ENCODE measurements at regions of chrX and their contacts with region 1.

Region 1: GRCh38 chrX:80808160-80808735 is 1.4 kb downstream of the BRWD3 start:
- DNase-seq: peak; percentile 54 to 82 (median 75)
- ATAC-seq: peak; percentile 72
- H3K4me3 ChIP-seq: peak overlapping the region; percentile 90
- H3K4me3 Mint-ChIP-seq: peak overlapping the region; percentile 81 to 96 (median 94)
- H3K27ac ChIP-seq: peak overlapping the region; percentile 88
- H3K27ac Mint-ChIP-seq: peak overlapping the region; percentile 72 to 99 (median 96)
- H3K4me1 ChIP-seq: peaks cover 8 to 21% of the 10 kb centered on the region in 2 donors
- H3K4me1 Mint-ChIP-seq: peaks cover 5 to 53% (median 32%) of the 10 kb centered on the region in 7 donors
- H3K27me3 ChIP-seq: no peaks in the 10 kb centered on the region
- H3K27me3 Mint-ChIP-seq: peaks cover 0 to 4% (median 0%) of the 10 kb centered on the region in 5 donors

Region 2: DNA sequence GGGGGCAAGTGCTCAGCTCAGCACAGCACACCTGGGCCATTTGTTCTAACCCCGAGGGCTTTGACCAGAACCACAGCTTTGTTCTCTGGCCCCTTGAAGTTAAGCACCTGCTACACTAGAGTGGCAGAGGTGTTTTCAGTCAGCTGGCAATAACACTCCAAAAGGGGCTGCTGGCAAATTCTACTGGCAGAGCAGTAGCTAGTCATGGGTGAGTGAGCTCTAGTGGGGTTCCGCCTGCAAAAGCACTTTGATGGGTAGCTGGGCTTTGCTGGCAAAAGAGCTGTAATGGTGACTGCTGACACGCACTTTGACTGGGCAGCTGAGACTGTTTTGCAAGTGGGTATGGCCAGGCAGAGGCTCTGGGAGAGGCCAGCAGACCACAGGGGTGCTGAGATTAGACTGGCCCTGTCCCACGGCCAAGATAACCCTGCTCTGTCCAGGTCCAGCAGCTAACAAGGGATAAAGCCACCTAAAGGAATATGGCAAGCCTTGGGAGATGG is 453.2 kb before region 1 on chrX:
- CTCF ChIA-PET with region 1: no interaction called
- POLR2A ChIA-PET with region 1: no interaction called
- intact Hi-C with region 1: no loop called
- DNase-seq: no peak
- ATAC-seq: no peak
- H3K4me3 ChIP-seq: no peak overlapping the region
- H3K4me3 Mint-ChIP-seq: no peak overlapping the region
- H3K27ac ChIP-seq: no peak overlapping the region
- H3K27ac Mint-ChIP-seq: no peak overlapping the region
- H3K4me1 ChIP-seq: no peaks in the 10 kb centered on the region
- H3K4me1 Mint-ChIP-seq: no peaks in the 10 kb centered on the region
- H3K27me3 ChIP-seq: no peaks in the 10 kb centered on the region
- H3K27me3 Mint-ChIP-seq: no peaks in the 10 kb centered on the region

Region 3: DNA sequence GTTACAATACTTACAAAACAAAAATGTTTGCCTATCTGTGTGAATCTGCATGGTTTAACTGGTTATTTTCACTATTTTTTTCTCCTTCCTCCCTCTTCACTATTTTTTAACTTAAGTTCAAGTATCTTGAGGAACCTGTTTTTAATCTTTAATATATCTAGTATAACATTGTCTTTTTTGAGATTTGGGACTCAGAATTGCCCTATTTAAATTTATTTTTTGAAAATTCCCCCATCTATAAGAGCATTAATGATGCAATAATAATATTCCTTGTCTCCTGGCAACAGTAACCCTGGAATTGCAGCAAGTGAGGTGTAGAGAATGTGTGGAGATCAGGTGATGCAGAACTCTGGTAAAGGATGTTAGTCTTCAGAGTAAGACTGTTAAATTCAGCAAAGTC is 388.1 kb before region 1 on chrX and contains the start of gene TENT5D:
- CTCF ChIA-PET with region 1: no interaction called
- POLR2A ChIA-PET with region 1: no interaction called
- intact Hi-C with region 1: no loop called
- DNase-seq: no peak
- ATAC-seq: no peak
- H3K4me3 ChIP-seq: no peak within 1 kb of the TSS
- H3K4me3 Mint-ChIP-seq: no peak within 1 kb of the TSS
- H3K27ac ChIP-seq: no peak within 1 kb of the TSS
- H3K27ac Mint-ChIP-seq: no peak within 1 kb of the TSS
- H3K4me1 ChIP-seq: no peaks in the 10 kb centered on the region
- H3K4me1 Mint-ChIP-seq: no peaks in the 10 kb centered on the region
- H3K27me3 ChIP-seq: no peaks in the 10 kb centered on the region
- H3K27me3 Mint-ChIP-seq: peaks cover 0 to 4% (median 0%) of the 10 kb centered on the region in 5 donors
- total RNA-seq, gene TENT5D: not detected

Region 4: DNA sequence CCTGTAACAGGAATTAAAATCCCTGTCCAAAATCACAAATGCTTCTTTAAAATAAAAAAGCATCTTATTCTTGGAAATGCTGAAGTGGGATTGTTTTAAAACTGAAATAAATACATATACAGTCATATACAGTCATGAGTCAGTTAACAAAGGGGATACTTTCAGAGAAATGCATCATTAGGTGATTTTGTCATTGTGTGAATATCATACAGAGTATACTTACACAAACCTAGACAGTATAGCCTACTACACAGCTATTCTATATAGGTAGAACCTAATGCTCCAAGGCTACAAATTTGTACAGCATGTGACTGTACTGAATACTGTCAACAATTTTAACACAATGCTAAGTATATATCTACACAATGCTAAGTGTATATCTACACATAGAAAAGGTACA is 102.9 kb before region 1 on chrX:
- CTCF ChIA-PET with region 1: no interaction called
- POLR2A ChIA-PET with region 1: no interaction called
- intact Hi-C with region 1: no loop called
- DNase-seq: no peak
- ATAC-seq: no peak
- H3K4me3 ChIP-seq: no peak overlapping the region
- H3K4me3 Mint-ChIP-seq: no peak overlapping the region
- H3K27ac ChIP-seq: no peak overlapping the region
- H3K27ac Mint-ChIP-seq: no peak overlapping the region
- H3K4me1 ChIP-seq: no peaks in the 10 kb centered on the region
- H3K4me1 Mint-ChIP-seq: peaks cover 0 to 1% (median 0%) of the 10 kb centered on the region in 7 donors
- H3K27me3 ChIP-seq: no peaks in the 10 kb centered on the region
- H3K27me3 Mint-ChIP-seq: no peaks in the 10 kb centered on the region

Region 5: GRCh38 chrX:80846247-80846646 is 38.0 kb after region 1 on chrX:
- CTCF ChIA-PET with region 1: no interaction called
- POLR2A ChIA-PET with region 1: no interaction called
- intact Hi-C with region 1: loop called in 1 of 2 experiments (anchors 5 kb)
- DNase-seq: no peak
- ATAC-seq: no peak
- H3K4me3 ChIP-seq: no peak overlapping the region
- H3K4me3 Mint-ChIP-seq: no peak overlapping the region
- H3K27ac ChIP-seq: no peak overlapping the region
- H3K27ac Mint-ChIP-seq: no peak overlapping the region
- H3K4me1 ChIP-seq: no peaks in the 10 kb centered on the region
- H3K4me1 Mint-ChIP-seq: no peaks in the 10 kb centered on the region
- H3K27me3 ChIP-seq: no peaks in the 10 kb centered on the region
- H3K27me3 Mint-ChIP-seq: no peaks in the 10 kb centered on the region

Region 6: GRCh38 chrX:80876877-80877276 is 68.6 kb after region 1 on chrX:
- CTCF ChIA-PET with region 1: no interaction called
- POLR2A ChIA-PET with region 1: no interaction called
- intact Hi-C with region 1: loop called in 1 of 2 experiments (anchors 2 kb)
- DNase-seq: peak in 5 of 9 donors; percentile 2 to 36 (median 23)
- ATAC-seq: no peak
- H3K4me3 ChIP-seq: no peak overlapping the region
- H3K4me3 Mint-ChIP-seq: no peak overlapping the region
- H3K27ac ChIP-seq: no peak overlapping the region
- H3K27ac Mint-ChIP-seq: no peak overlapping the region
- H3K4me1 ChIP-seq: no peaks in the 10 kb centered on the region
- H3K4me1 Mint-ChIP-seq: no peaks in the 10 kb centered on the region
- H3K27me3 ChIP-seq: no peaks in the 10 kb centered on the region
- H3K27me3 Mint-ChIP-seq: no peaks in the 10 kb centered on the region

Region 7: DNA sequence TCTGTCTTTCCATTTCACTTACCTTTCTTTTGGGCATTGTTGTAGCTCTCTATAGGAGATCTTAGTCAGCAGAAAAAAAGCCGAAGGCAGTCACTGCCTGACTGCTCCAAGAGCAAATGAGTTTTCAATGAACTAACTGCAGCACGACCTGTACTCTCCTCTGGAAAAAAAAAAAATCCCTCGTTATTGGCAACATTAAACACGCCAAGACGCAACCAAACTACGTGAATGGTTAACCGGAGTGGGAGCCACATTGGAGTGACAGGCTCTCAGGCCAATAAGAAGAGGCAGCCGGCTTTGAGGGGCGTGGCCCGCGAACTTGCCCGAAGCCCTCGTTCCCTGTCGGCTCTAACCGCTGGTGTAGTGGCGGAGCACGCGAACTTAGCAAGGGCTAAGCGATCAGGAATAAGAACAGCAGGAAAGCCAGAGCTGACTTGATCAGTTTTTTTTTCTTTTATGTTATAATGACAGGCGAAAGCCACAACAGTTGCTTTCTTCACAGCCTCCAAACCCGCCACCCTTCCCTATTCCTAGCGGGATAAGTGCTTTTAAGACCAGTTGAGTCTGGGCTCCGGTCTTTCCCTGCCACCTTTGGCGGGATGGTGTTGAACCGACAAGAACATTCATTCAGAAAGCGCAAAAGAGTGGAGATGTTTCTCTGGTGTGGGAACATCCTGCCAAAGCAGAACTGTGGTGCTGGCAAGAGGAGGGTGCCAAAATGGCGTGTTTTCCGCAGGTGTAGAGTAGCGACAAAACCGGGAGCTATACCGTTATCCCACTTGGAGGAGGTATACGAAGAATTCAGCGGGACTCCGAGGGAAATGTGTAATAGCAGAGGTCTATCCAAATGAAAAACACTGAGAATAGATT is 313.5 kb after region 1 on chrX:
- CTCF ChIA-PET with region 1: interaction called, 4 read pairs
- POLR2A ChIA-PET with region 1: no interaction called
- intact Hi-C with region 1: loop called (anchors 1 kb)
- DNase-seq: peak; percentile 71 to 87 (median 84)
- ATAC-seq: peak; percentile 97
- H3K4me3 ChIP-seq: peak overlapping the region; percentile 77
- H3K4me3 Mint-ChIP-seq: peak overlapping the region; percentile 85 to 98 (median 93)
- H3K27ac ChIP-seq: peak overlapping the region; percentile 52
- H3K27ac Mint-ChIP-seq: peak overlapping the region; percentile 63 to 90 (median 77)
- H3K4me1 ChIP-seq: no peaks in the 10 kb centered on the region
- H3K4me1 Mint-ChIP-seq: peaks cover 0 to 17% (median 6%) of the 10 kb centered on the region in 7 donors
- H3K27me3 ChIP-seq: no peaks in the 10 kb centered on the region
- H3K27me3 Mint-ChIP-seq: peaks cover 0 to 21% (median 0%) of the 10 kb centered on the region in 5 donors

Region 8: DNA sequence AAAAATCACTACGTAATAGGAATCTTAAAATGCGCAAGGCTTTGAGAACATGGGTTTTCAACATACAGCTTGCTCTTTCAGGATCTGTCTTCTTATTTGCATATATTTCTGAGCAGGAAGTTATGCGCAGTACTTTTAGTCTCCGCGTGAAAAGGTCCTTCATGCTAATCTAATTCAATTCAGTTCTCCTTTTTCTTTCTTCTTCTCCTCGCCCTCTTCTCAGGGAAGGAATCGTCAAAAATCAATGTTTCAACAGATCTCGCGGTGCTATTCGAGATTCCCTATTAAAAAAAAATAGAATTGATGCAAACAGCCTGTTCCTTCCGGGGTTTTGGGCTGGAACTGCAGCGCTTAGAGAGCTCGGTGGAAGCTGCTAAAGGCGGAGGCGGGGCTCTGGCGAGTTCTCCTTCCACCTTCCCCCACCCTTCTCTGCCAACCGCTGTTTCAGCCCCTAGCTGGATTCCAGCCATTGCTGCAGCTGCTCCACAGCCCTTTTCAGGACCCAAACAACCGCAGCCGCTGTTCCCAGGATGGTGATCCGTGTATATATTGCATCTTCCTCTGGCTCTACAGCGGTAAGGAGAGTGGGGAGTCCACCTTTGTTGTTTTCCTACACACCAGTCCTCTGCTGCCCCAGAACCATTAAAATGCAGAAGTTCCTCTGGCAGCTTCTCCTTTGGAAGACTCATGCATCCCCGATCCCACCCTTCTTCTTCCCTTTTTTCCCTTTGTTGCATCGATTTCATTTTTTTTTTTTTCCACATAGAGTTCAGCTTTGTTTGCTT is 393.6 kb after region 1 on chrX and contains the starts of genes HMGN5 and SH3BGRL:
- CTCF ChIA-PET with region 1: interaction called, 4 read pairs
- POLR2A ChIA-PET with region 1: interaction called, 13 read pairs
- intact Hi-C with region 1: loop called (anchors 1 kb)
- DNase-seq: peak; percentile 34 to 80 (median 70)
- ATAC-seq: peak; percentile 95
- H3K4me3 ChIP-seq: peak within 1 kb of the TSS; percentile 97
- H3K4me3 Mint-ChIP-seq: peak within 1 kb of the TSS; percentile 89 to 99 (median 96)
- H3K27ac ChIP-seq: peak within 1 kb of the TSS; percentile 87
- H3K27ac Mint-ChIP-seq: peak within 1 kb of the TSS; percentile 92 to 99 (median 96)
- H3K4me1 ChIP-seq: peaks cover 0 to 13% of the 10 kb centered on the region in 2 donors
- H3K4me1 Mint-ChIP-seq: peaks cover 25 to 66% (median 55%) of the 10 kb centered on the region in 7 donors
- H3K27me3 ChIP-seq: no peaks in the 10 kb centered on the region
- H3K27me3 Mint-ChIP-seq: no peaks in the 10 kb centered on the region
- total RNA-seq, gene HMGN5: 0.46 to 2.6 (median 1.0) TPM
- total RNA-seq, gene SH3BGRL: 66.6 to 140 (median 75.3) TPM

Region 9: GRCh38 chrX:82412858-82413257 is 1604.6 kb after region 1 on chrX:
- CTCF ChIA-PET with region 1: no interaction called
- POLR2A ChIA-PET with region 1: no interaction called
- intact Hi-C with region 1: no loop called
- DNase-seq: no peak
- ATAC-seq: no peak
- H3K4me3 ChIP-seq: no peak overlapping the region
- H3K4me3 Mint-ChIP-seq: no peak overlapping the region
- H3K27ac ChIP-seq: no peak overlapping the region
- H3K27ac Mint-ChIP-seq: no peak overlapping the region
- H3K4me1 ChIP-seq: no peaks in the 10 kb centered on the region
- H3K4me1 Mint-ChIP-seq: no peaks in the 10 kb centered on the region
- H3K27me3 ChIP-seq: no peaks in the 10 kb centered on the region
- H3K27me3 Mint-ChIP-seq: no peaks in the 10 kb centered on the region